K562 (cell line): ENCODE measurements at regions of chr7 and their contacts with region 1.

Region 1: GRCh38 chr7:39969431-39969830 is 19.4 kb downstream of the CDK13 start:
- DNase-seq: no peak
- ATAC-seq: no peak; the same call in 2 of the 3 replicates
- H3K4me3 ChIP-seq: no peak overlapping the region
- H3K27ac ChIP-seq: no peak overlapping the region
- H3K4me1 ChIP-seq: no peaks in the 10 kb centered on the region; a peak in 2 of 5 replicates
- H3K27me3 ChIP-seq: no peaks in the 10 kb centered on the region
- CTCF ChIP-seq: no peak
- EP300 ChIP-seq: no peak
- POLR2A ChIP-seq: no peak
- RAD21 ChIP-seq: no peak

Region 2: DNA sequence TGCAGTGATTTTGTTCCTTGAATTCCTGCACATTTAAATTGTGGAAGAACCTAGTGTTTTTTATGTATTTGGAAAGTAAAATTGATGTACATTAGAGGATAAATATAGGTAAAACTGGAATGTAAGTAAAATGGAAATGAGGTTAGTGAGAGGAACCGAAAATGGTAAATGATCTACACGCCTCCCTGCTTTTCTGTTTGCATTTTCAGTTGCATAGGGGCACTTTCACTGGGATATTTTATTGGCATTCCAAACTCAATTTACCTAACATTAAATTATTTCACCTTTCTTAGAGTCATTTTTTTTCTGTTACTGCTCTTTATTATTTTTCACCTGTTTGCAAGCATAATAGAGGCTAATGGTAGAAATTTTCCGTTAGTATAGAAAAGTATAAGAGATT is 11.4 kb before region 1 on chr7:
- CTCF ChIA-PET with region 1: no interaction called
- POLR2A ChIA-PET with region 1: interaction called, 29 read pairs
- in situ Hi-C with region 1: no loop called
- intact Hi-C with region 1: no loop called
- DNase-seq: no peak
- ATAC-seq: no peak
- H3K4me3 ChIP-seq: no peak overlapping the region
- H3K27ac ChIP-seq: no peak overlapping the region
- H3K4me1 ChIP-seq: peaks cover 5% of the 10 kb centered on the region in 2 experiments; a peak in 2 of 5 replicates
- H3K27me3 ChIP-seq: no peaks in the 10 kb centered on the region
- CTCF ChIP-seq: no peak
- EP300 ChIP-seq: no peak
- POLR2A ChIP-seq: no peak
- RAD21 ChIP-seq: no peak